ENCODE measurements at regions of chr1 and their contacts with region 1.

Region 1: GRCh38 chr1:208245185-208245705 is 1.1 kb upstream of the PLXNA2 start:
- DNase-seq: peak; percentile 98
- H3K4me3 Mint-ChIP-seq: peak overlapping the region; percentile 94
- H3K27ac Mint-ChIP-seq: no peak overlapping the region
- H3K4me1 Mint-ChIP-seq: peaks cover 26% of the 10 kb centered on the region
- H3K27me3 Mint-ChIP-seq: no peaks in the 10 kb centered on the region
- CTCF ChIP-seq: peak; percentile 94

Region 2: DNA sequence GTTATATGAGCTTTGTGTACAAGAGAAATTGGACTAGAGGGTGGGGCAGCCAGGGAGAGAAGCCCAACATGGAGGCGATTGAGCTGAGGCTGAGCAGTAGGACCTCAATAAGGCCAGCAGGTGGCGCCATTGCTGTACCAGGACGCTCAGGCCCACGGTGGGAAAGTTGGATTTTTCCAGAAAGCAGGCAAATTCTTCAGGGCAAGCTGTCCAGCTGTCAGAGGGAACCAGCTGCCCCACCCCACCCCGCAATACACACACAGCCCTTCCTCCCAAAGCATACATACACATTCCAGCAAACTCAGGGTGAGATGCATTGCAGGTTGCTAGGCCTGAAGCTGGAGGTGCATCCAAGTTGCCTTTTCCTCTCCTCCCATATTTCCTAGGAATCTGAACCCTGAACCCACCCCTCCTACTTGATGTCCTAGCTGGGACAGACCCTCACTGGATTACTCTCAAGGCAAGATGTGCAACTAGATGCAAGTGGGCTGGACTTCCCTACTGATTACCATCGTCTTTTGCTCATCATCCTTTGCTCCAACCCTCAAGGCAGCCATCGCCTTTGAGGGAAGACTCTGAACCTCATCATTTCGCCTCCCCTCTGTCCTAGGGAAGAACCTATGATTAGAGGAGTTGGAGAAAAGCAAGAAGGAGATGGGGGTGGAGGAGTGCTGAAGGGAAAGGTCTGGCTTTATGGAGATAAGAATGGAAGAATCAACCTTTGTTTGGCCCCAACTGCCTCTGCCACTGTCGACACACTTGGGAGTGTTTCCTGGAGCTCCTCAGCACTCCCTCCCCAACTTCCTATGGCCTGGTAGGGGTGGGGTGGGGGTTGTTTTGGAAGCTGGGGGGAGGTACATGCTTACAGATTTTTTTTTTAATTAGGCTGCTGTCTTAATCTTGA is 359.9 kb before region 1 on chr1:
- CTCF ChIA-PET with region 1: interaction called, 20 read pairs
- POLR2A ChIA-PET with region 1: no interaction called
- intact Hi-C with region 1: loop called (anchors 1 kb)
- DNase-seq: peak; percentile 94
- H3K4me3 Mint-ChIP-seq: no peak overlapping the region
- H3K27ac Mint-ChIP-seq: no peak overlapping the region
- H3K4me1 Mint-ChIP-seq: peaks cover 40% of the 10 kb centered on the region
- H3K27me3 Mint-ChIP-seq: peaks cover 16% of the 10 kb centered on the region
- CTCF ChIP-seq: peak; percentile 100

Region 3: DNA sequence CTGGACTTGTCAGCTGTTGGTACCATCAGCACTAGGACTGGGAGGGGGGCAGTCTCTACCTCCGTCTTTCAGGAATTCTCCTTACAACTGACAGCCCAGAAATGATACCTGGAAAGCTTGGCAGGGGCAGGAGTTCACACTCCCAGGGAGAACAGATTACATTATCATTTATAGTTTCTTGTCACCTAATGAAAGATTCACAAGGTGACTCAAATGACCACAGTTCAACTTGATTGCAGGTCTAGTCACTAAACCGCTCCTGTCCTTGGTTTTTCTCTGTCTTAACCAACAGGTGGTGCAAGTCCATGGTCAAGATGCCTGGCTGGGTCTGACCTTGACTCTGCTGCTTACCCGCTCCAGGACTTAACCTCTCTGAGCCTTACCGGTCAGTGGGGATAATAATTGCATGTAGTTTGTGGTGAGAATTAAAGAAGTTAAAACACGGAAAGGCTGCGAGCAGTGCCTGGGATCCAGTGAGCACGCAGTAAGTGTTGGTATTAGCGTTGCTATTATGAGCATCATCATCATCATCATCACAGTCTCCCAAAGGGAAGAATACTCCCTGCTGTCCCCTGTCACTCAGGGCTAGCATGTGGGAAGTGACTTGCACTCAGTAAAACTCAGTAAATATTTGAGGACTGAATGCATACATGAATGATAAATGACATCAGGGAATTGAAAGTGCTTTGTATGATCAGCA is 209.0 kb before region 1 on chr1:
- CTCF ChIA-PET with region 1: interaction called, 688 read pairs
- POLR2A ChIA-PET with region 1: interaction called, 6 read pairs
- intact Hi-C with region 1: loop called (anchors 1 kb)
- DNase-seq: peak; percentile 56
- H3K4me3 Mint-ChIP-seq: no peak overlapping the region
- H3K27ac Mint-ChIP-seq: peak overlapping the region; percentile 16
- H3K4me1 Mint-ChIP-seq: no peaks in the 10 kb centered on the region
- H3K27me3 Mint-ChIP-seq: no peaks in the 10 kb centered on the region
- CTCF ChIP-seq: peak; percentile 51

Region 4: DNA sequence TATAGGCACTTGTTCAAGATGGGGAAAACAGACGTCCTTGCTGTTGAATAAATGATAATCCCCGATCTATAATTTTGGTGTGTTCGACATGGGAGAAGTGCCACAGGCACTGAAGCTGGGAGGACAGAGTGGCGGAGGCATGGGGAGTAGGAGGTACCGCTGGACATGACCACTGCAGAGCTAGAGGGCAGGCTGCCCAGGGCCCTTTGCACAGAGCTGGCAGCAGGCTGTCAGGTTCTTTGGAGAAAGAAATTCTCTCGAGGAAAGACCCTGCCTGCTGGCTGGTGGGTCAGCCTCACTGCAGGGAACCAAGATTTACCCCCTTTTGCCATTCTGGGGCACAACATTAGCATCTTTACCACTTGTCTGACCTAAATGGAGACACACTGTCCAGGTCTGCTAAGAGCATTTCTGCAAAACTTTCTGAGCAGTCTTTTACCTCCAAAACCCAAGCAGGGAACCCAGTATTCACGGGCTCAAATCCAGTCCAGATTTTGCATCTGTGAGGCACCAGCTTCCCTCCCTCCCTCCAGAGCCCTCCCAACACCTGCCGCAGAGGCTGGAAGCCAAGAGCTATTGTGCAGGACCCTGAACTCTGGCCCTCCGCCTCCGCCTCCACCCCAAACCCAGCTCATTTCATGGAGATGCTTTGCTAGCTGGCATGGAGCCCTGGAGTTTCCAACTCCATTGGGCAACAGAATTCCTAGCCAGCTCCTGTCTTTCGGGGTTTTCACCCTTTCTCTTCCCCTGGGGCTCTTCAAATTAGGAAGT is 143.4 kb before region 1 on chr1:
- CTCF ChIA-PET with region 1: interaction called, 336 read pairs
- POLR2A ChIA-PET with region 1: interaction called, 18 read pairs
- intact Hi-C with region 1: no loop called
- DNase-seq: peak; percentile 99
- H3K4me3 Mint-ChIP-seq: no peak overlapping the region
- H3K27ac Mint-ChIP-seq: no peak overlapping the region
- H3K4me1 Mint-ChIP-seq: peaks cover 37% of the 10 kb centered on the region
- H3K27me3 Mint-ChIP-seq: no peaks in the 10 kb centered on the region
- CTCF ChIP-seq: no peak

Region 5: DNA sequence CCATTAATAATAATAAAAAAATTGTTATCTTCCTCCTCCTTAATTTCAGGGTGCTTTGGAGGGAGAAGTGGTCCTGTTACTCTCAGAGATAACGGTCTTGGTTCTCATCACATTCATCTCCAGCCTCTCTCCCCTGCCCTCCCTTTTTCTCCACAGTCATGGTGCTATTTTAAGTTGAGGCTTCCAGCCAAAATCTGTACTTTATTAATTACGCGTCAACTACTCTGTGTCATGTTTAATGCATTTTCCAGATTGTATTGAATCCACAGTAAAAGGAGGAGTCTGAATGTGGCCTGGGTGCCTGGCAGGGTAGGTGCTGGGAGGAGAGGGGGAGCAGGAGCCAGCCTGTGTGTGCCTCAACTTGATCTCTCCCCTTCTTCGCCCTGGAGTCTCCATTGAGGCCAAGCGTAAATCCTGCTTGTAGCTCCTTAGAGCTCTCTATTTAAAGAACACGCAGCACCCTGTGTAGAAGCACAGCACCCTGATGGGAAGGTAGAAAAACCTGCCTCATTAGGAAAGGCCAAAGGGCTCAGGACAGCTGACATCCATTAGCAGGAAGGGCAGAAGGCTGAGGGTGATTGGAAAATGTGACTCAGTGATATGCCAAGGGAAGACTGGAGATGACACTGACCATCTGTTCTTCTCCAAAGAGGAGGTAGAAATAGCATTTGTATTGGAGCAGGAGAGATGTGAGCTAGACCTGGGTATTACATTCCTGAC is 83.4 kb before region 1 on chr1:
- CTCF ChIA-PET with region 1: interaction called, 1,037 read pairs
- POLR2A ChIA-PET with region 1: interaction called, 12 read pairs
- intact Hi-C with region 1: no loop called
- DNase-seq: no peak
- H3K4me3 Mint-ChIP-seq: no peak overlapping the region
- H3K27ac Mint-ChIP-seq: no peak overlapping the region
- H3K4me1 Mint-ChIP-seq: peaks cover 41% of the 10 kb centered on the region
- H3K27me3 Mint-ChIP-seq: no peaks in the 10 kb centered on the region
- CTCF ChIP-seq: no peak

Region 6: DNA sequence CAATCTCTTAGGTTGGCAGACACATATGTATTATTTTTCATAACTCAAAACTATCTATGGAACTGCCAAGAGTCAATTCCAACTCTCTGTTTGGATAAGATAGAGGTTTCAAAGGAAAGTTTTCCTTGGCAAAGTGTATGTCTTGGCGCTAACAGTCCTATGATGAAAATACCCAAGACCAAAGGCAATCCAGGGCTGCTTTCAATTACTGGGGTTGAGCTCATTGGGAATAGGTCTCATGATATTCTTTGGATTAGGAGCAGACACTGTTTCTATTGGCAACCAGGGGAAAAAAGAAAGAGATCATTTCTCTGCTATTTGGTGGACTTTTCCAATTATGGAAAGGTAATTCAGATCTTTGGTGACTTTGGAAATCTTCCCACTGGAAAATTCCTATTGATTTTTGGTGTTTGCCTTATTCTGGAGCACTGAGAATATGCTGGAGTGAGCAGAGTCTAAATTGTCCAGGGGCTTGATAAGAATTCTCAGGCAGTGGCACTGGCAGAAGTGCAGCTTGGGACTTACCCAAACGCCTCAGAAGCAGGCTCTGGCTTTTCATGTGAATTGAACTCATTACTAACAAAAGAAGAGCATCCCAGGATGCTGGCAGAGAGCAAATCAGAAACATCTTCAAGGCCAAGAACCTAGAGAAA is 19.4 kb after region 1 on chr1:
- CTCF ChIA-PET with region 1: interaction called, 27 read pairs
- POLR2A ChIA-PET with region 1: interaction called, 4 read pairs
- intact Hi-C with region 1: no loop called
- DNase-seq: no peak
- H3K4me3 Mint-ChIP-seq: no peak overlapping the region
- H3K27ac Mint-ChIP-seq: no peak overlapping the region
- H3K4me1 Mint-ChIP-seq: no peaks in the 10 kb centered on the region
- H3K27me3 Mint-ChIP-seq: peaks cover 90% of the 10 kb centered on the region
- CTCF ChIP-seq: no peak

Region 7: DNA sequence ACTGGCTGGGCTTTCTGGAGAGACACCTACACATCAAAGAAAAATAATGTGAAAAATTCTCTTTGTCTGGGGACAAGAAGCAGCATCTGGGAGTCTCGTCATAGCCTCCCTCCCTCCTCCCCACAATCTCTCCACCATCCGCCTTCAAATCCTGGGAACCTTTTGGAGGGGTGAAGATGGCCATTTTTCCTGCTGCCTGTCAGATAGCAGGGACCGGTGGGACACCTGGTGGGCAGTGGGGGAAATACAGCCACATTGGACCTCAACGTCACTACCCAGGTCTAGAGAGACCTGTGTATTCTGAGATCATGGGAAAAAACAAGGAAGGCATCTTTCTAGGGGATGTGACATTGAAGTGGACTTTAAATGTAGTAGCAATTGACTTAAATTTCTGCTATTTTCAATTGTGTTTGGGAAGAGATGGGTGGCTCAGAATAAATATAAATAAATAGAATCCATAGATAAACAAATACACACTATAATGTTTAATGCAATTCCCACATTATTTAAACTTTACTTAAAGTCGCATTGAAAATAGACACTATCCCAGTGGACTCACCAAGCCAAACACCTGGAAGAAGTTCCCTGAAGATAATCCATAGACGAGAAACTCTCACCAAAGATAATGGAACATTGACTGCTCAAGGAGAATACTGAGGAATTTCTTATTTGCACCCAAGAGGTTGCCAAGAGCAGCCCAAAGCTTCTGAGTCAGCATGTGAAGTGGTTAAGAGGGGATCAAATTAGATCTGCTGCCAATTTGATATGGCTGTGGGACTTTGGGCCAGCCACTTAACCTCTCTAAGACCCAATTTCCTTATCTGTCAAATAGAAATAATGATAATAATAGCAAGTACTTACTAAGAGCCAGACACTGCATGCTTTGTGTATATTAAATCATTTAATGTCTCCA is 1190.7 kb after region 1 on chr1:
- CTCF ChIA-PET with region 1: no interaction called
- POLR2A ChIA-PET with region 1: interaction called, 12 read pairs
- intact Hi-C with region 1: no loop called
- DNase-seq: peak; percentile 97
- H3K4me3 Mint-ChIP-seq: no peak overlapping the region
- H3K27ac Mint-ChIP-seq: peak overlapping the region; percentile 90
- H3K4me1 Mint-ChIP-seq: peaks cover 51% of the 10 kb centered on the region
- H3K27me3 Mint-ChIP-seq: no peaks in the 10 kb centered on the region
- CTCF ChIP-seq: peak; percentile 100

Region 8: DNA sequence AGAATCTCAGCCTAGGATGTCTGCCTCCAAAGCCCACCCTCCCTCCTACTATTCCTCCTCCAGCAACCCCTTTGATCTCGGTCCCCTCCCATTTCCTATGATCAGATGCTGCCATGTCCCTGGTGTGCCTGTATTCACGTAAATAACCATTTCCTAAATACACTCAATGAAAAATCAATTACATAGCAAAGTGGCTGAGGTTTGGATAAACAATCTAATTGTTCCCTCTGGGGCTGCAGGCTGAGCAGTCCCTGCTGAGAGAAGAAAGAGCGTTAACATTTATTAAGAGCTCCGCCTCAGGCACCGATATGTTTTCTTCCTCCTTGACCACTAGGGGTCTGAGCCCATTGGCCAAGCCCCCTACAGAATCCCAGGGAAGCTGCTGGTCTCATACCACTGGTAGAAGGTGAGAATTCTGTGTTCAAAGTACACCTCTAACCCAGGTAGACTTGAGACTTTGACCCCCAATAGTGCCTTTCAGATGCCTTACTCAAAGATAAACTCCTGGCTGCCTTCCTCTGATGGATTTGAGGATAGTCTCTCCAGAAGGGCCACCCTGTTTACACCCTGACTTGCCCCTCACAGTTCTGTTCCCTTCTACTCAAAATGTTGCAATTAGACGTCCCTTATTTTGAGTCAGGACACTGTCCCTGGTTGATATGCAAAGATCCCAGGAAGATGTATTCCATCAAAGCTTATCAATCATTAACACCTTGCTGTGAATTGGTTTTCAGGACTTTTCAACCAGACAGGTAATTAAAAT is 1304.4 kb after region 1 on chr1:
- CTCF ChIA-PET with region 1: no interaction called
- POLR2A ChIA-PET with region 1: no interaction called
- intact Hi-C with region 1: no loop called
- DNase-seq: no peak
- H3K4me3 Mint-ChIP-seq: no peak overlapping the region
- H3K27ac Mint-ChIP-seq: no peak overlapping the region
- H3K4me1 Mint-ChIP-seq: peaks cover 24% of the 10 kb centered on the region
- H3K27me3 Mint-ChIP-seq: no peaks in the 10 kb centered on the region
- CTCF ChIP-seq: no peak

Measured in MCF 10A (cell line).